CD4-positive, alpha-beta T cell (primary cell): ENCODE measurements at regions of chr19 and their contacts with region 1.

Region 1: GRCh38 chr19:17775245-17775916 is 19.6 kb upstream of the B3GNT3 start:
- DNase-seq: peak in 9 of 14 experiments; percentile 19 to 60 (median 40)
- ATAC-seq: no peak
- H3K4me3 ChIP-seq: no peak overlapping the region
- H3K4me3 Mint-ChIP-seq: no peak overlapping the region
- H3K27ac ChIP-seq: no peak overlapping the region
- H3K27ac Mint-ChIP-seq: peak overlapping the region; percentile 38
- H3K4me1 ChIP-seq: no peaks in the 10 kb centered on the region
- H3K4me1 Mint-ChIP-seq: no peaks in the 10 kb centered on the region
- H3K27me3 ChIP-seq: no peaks in the 10 kb centered on the region
- H3K27me3 Mint-ChIP-seq: no peaks in the 10 kb centered on the region
- CTCF ChIP-seq: peak; percentile 67

Region 2: GRCh38 chr19:17703824-17704463 is 71.4 kb before region 1 on chr19:
- CTCF ChIA-PET with region 1: no interaction called
- POLR2A ChIA-PET with region 1: no interaction called
- intact Hi-C with region 1: loop called in 1 of 2 experiments (anchors 2 kb)
- DNase-seq: peak; percentile 63 to 80 (median 66)
- ATAC-seq: peak; percentile 99
- H3K4me3 ChIP-seq: no peak overlapping the region
- H3K4me3 Mint-ChIP-seq: no peak overlapping the region
- H3K27ac ChIP-seq: no peak overlapping the region
- H3K27ac Mint-ChIP-seq: no peak overlapping the region
- H3K4me1 ChIP-seq: peaks cover 4% of the 10 kb centered on the region
- H3K4me1 Mint-ChIP-seq: peaks cover 4% of the 10 kb centered on the region
- H3K27me3 ChIP-seq: peaks cover 2 to 4% of the 10 kb centered on the region in 2 experiments
- H3K27me3 Mint-ChIP-seq: peaks cover 6% of the 10 kb centered on the region
- CTCF ChIP-seq: peak; percentile 93

Region 3: GRCh38 chr19:17725422-17726078 is 49.8 kb before region 1 on chr19:
- CTCF ChIA-PET with region 1: no interaction called
- POLR2A ChIA-PET with region 1: no interaction called
- intact Hi-C with region 1: no loop called
- DNase-seq: peak in 4 of 14 experiments; percentile 12 to 45 (median 32)
- ATAC-seq: peak; percentile 32
- H3K4me3 ChIP-seq: no peak overlapping the region
- H3K4me3 Mint-ChIP-seq: no peak overlapping the region
- H3K27ac ChIP-seq: no peak overlapping the region
- H3K27ac Mint-ChIP-seq: no peak overlapping the region
- H3K4me1 ChIP-seq: peaks cover 24% of the 10 kb centered on the region
- H3K4me1 Mint-ChIP-seq: peaks cover 23% of the 10 kb centered on the region
- H3K27me3 ChIP-seq: no peaks in the 10 kb centered on the region
- H3K27me3 Mint-ChIP-seq: no peaks in the 10 kb centered on the region
- CTCF ChIP-seq: peak; percentile 23

Region 4: DNA sequence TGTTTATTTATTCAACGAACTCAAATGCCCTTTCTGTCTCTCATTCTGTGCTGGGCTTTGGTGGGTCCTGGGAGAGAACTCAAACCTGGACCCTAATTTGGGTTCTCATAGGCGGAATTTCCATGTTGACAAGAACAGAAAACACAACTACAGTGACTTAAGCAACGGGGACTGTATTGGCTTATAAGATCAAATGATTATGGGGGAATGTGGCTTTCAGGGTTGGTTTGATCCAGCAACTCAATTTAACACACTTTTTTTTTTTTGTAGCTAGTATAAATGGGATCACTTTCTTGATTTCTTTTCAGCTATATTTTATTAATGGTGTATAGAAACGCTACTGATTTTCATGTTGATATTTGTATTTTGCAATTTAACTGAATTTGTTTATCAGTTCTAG is 14.2 kb before region 1 on chr19:
- CTCF ChIA-PET with region 1: no interaction called
- POLR2A ChIA-PET with region 1: no interaction called
- intact Hi-C with region 1: loop called in 1 of 2 experiments (anchors 1 kb)
- DNase-seq: no peak
- ATAC-seq: no peak
- H3K4me3 ChIP-seq: no peak overlapping the region
- H3K4me3 Mint-ChIP-seq: no peak overlapping the region
- H3K27ac ChIP-seq: no peak overlapping the region
- H3K27ac Mint-ChIP-seq: no peak overlapping the region
- H3K4me1 ChIP-seq: peaks cover 1% of the 10 kb centered on the region
- H3K4me1 Mint-ChIP-seq: peaks cover 2% of the 10 kb centered on the region
- H3K27me3 ChIP-seq: no peaks in the 10 kb centered on the region
- H3K27me3 Mint-ChIP-seq: no peaks in the 10 kb centered on the region
- CTCF ChIP-seq: no peak

Region 5: GRCh38 chr19:17847538-17848366 is 72.4 kb after region 1 on chr19 and contains the start of gene JAK3:
- CTCF ChIA-PET with region 1: no interaction called
- POLR2A ChIA-PET with region 1: no interaction called
- intact Hi-C with region 1: no loop called
- DNase-seq: peak; percentile 67 to 93 (median 83)
- ATAC-seq: peak; percentile 81
- H3K4me3 ChIP-seq: peak within 1 kb of the TSS; percentile 65
- H3K4me3 Mint-ChIP-seq: peak within 1 kb of the TSS; percentile 99
- H3K27ac ChIP-seq: peak within 1 kb of the TSS; percentile 90 to 98
- H3K27ac Mint-ChIP-seq: peak within 1 kb of the TSS; percentile 94
- H3K4me1 ChIP-seq: peaks cover 85% of the 10 kb centered on the region
- H3K4me1 Mint-ChIP-seq: peaks cover 72% of the 10 kb centered on the region
- H3K27me3 ChIP-seq: no peaks in the 10 kb centered on the region
- H3K27me3 Mint-ChIP-seq: no peaks in the 10 kb centered on the region
- CTCF ChIP-seq: no peak
- total RNA-seq, gene JAK3: 120 to 121 TPM